Activated T-helper 1 cell treated with anti-CD3 and anti-CD28 coated beads, Interleukin-12 subunit alpha, Interleukin-12 subunit beta, Interleukin-2, Interleukin-4 antibody, amounts not matched to agents 30 ng/mL and 10 ng/mL and 1 ng/mL, durations not matched to agents 14 hours and 24 hours and 36 hours (primary cell): ENCODE measurements at regions of chr17 and their contacts with region 1.

Region 1: GRCh38 chr17:7136266-7136877 is 21.8 kb upstream of the ASGR2 start:
- DNase-seq: peak; percentile 57
- H3K4me3 Mint-ChIP-seq: no peak overlapping the region
- H3K27ac Mint-ChIP-seq: no peak overlapping the region
- H3K4me1 Mint-ChIP-seq: peaks cover 23% of the 10 kb centered on the region
- H3K27me3 Mint-ChIP-seq: peaks cover 17% of the 10 kb centered on the region

Region 2: GRCh38 chr17:6567529-6568183 is 568.7 kb before region 1 on chr17:
- intact Hi-C with region 1: no loop called
- DNase-seq: no peak
- H3K4me3 Mint-ChIP-seq: no peak overlapping the region
- H3K27ac Mint-ChIP-seq: no peak overlapping the region
- H3K4me1 Mint-ChIP-seq: no peaks in the 10 kb centered on the region
- H3K27me3 Mint-ChIP-seq: peaks cover 6% of the 10 kb centered on the region

Region 3: DNA sequence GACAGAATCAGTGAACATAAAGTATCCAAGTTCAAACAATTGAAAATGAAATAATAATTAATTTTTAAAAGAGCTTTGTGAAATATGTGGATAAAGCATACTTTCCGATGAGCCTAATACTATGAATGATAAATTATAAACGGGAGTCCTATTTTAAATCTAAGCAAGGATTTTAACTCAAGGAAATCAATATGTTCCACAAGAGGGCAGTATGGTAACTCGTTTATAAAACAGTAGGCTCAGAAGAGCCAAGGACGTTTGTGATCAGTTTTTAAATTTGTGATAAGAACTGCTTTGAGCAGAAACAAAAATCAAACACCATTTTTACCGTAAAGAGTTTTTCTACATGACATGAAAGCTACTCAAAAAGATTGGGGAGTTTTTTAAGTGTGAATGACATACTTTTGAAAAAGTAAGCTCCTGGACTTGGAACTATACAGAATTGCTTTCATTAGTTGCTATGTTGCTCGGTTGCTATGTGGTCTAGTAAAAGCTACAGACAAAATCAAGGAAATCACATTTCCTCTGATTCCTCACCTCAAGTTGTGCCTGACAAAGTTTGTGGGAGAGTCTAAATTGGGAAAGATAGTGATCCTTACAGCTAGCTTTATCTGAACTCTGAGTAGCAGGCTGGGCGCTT is 293.0 kb before region 1 on chr17:
- intact Hi-C with region 1: loop called (anchors 1 kb)
- DNase-seq: no peak
- H3K4me3 Mint-ChIP-seq: no peak overlapping the region
- H3K27ac Mint-ChIP-seq: no peak overlapping the region
- H3K4me1 Mint-ChIP-seq: peaks cover 13% of the 10 kb centered on the region
- H3K27me3 Mint-ChIP-seq: peaks cover 46% of the 10 kb centered on the region

Region 4: GRCh38 chr17:6913608-6914443 is 222.5 kb before region 1 on chr17:
- intact Hi-C with region 1: loop called (anchors 1 kb)
- DNase-seq: peak; percentile 48
- H3K4me3 Mint-ChIP-seq: peak overlapping the region; percentile 76
- H3K27ac Mint-ChIP-seq: no peak overlapping the region
- H3K4me1 Mint-ChIP-seq: peaks cover 33% of the 10 kb centered on the region
- H3K27me3 Mint-ChIP-seq: peaks cover 18% of the 10 kb centered on the region

Region 5: GRCh38 chr17:7045909-7046724 is 90.3 kb before region 1 on chr17:
- intact Hi-C with region 1: loop called (anchors 1 kb)
- DNase-seq: no peak
- H3K4me3 Mint-ChIP-seq: peak overlapping the region; percentile 66
- H3K27ac Mint-ChIP-seq: peak overlapping the region; percentile 72
- H3K4me1 Mint-ChIP-seq: peaks cover 20% of the 10 kb centered on the region
- H3K27me3 Mint-ChIP-seq: peaks cover 8% of the 10 kb centered on the region

Region 6: GRCh38 chr17:7060165-7060891 is 76.0 kb before region 1 on chr17:
- intact Hi-C with region 1: loop called (anchors 1 kb)
- DNase-seq: no peak
- H3K4me3 Mint-ChIP-seq: peak overlapping the region; percentile 37
- H3K27ac Mint-ChIP-seq: peak overlapping the region; percentile 74
- H3K4me1 Mint-ChIP-seq: peaks cover 15% of the 10 kb centered on the region
- H3K27me3 Mint-ChIP-seq: peaks cover 4% of the 10 kb centered on the region

Region 7: DNA sequence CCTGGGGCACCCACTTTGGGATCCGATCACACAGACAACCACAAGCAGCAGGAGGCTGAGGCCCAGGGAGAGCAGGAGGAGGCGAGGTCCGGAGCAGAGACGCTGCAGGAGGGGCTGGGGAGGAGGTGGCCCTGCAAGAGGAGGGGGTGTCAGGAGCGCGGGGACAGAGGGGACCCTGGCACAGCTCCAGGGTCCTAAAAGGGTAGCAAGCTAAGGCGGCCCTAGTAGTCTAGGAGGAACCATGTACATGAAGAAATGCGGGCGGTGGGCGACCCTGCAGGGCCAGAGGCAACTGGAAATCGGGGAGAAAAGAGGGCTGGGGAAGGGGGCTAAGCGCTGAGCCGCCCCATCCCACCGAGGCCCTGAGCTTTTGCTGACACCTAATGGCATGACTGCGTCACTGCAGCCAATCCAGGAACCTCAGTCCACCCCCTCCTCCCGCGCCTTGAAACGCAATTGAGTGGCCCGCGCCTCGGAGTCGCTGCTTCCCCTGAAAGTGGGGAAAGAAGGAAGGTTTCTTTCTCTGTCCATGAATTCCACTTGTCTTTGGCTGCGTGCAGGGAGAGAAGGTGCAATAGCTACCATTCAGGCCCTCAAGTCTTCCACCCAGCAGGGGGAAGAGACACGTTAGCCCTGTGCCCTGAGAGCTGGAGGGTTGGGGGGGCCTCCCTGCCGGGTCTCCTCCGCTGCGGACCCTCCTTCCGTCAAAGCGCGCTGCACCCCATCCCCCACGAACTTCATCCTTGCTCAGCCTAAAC is 41.0 kb after region 1 on chr17:
- intact Hi-C with region 1: loop called (anchors 1 kb)
- DNase-seq: peak; percentile 58
- H3K4me3 Mint-ChIP-seq: peak overlapping the region; percentile 74
- H3K27ac Mint-ChIP-seq: no peak overlapping the region
- H3K4me1 Mint-ChIP-seq: peaks cover 10% of the 10 kb centered on the region
- H3K27me3 Mint-ChIP-seq: peaks cover 12% of the 10 kb centered on the region

Region 8: DNA sequence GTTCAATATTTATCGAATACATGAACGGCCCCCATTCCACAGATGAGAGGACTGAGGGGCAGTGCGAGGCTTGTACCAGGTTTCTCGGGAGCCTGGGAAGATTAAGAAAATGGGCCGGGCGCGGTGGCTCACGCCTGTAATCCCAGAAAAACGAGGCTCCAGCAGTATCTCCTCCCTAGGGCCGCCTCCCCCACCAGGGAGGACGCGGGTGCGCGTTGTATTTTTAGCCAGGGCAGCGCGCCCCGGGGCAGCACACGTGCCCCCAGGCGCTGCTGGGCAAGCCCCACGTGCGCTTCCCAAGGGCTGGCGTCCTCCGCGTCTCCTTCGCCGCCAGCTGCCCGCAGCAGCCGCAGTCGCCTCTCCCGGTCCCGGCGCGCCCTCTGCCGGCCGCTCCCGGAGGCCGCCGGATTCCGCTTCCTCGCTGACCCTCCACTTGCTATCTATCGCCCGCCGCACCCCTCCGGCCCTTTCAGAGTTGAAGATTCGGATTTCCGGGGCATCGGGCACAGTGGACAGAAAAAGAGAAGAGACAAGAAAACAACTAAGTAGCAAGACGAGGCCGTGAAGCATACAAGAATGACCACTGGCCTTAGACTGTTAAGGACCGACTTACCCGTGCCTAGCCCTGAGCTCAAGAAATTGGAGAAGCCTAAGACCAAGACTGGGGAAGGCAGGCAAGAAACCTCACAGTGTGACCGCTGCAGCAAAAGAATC is 160.0 kb after region 1 on chr17:
- intact Hi-C with region 1: loop called (anchors 5 kb)
- DNase-seq: peak; percentile 63
- H3K4me3 Mint-ChIP-seq: peak overlapping the region; percentile 22
- H3K27ac Mint-ChIP-seq: no peak overlapping the region
- H3K4me1 Mint-ChIP-seq: peaks cover 16% of the 10 kb centered on the region
- H3K27me3 Mint-ChIP-seq: peaks cover 34% of the 10 kb centered on the region